Naive thymus-derived CD4-positive, alpha-beta T cell (primary cell): ENCODE measurements at regions of chr7 and their contacts with region 1.

Region 1: DNA sequence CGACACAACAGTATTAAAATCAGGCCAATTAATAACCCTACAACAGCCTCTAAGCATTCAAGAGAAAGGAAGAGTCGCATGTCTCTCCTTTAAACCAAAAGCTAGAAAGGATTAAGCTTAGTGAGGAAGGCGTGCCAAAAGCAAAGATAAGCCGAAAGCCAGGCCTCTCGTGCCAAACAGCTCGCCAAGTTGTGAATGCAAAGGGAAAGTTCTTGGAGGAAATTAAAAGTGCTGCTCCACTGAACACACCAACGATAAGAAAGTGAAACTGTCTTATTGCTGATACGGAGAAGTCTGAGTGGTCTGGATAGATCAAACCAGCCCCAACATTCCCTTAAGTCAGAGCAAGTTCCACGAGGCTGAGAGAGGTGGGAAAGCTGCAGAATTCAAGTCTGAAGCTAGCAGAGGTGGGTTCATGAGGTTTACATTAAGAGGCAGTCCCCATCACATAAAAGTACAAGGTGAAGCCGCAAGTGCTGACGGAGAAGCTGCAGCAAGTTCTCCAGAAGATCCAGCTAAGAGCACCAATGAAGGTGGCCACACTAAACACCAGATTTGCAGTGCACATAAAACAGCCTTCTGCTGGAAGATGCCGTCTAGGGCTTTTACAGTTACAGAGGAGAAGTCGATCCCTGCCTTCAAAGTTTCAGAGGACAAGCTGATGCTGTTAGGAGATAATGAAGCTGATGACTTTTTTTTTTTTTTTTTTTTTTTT is 194.8 kb downstream of the MAD1L1 start:
- DNase-seq: peak in 7 of 9 donors; percentile 44 to 66 (median 53)
- ATAC-seq: peak; percentile 65
- H3K4me3 ChIP-seq: peak overlapping the region; percentile 83
- H3K4me3 Mint-ChIP-seq: peak overlapping the region; percentile 83 to 95 (median 92)
- H3K27ac ChIP-seq: peak overlapping the region; percentile 70
- H3K27ac Mint-ChIP-seq: peak overlapping the region; percentile 73 to 95 (median 92)
- H3K4me1 ChIP-seq: peaks cover 18 to 23% of the 10 kb centered on the region in 2 donors
- H3K4me1 Mint-ChIP-seq: peaks cover 37 to 66% (median 59%) of the 10 kb centered on the region in 7 donors
- H3K27me3 ChIP-seq: no peaks in the 10 kb centered on the region
- H3K27me3 Mint-ChIP-seq: no peaks in the 10 kb centered on the region

Region 2: GRCh38 chr7:1979591-1980560 is 58.1 kb before region 1 on chr7:
- CTCF ChIA-PET with region 1: no interaction called
- POLR2A ChIA-PET with region 1: no interaction called
- intact Hi-C with region 1: loop called (anchors 5 to 10 kb)
- DNase-seq: no peak
- ATAC-seq: peak; percentile 10
- H3K4me3 ChIP-seq: no peak overlapping the region
- H3K4me3 Mint-ChIP-seq: peak overlapping the region in 1 of 10 donors; percentile 34
- H3K27ac ChIP-seq: no peak overlapping the region
- H3K27ac Mint-ChIP-seq: peak overlapping the region in 1 of 9 donors; percentile 32
- H3K4me1 ChIP-seq: peaks cover 0 to 20% of the 10 kb centered on the region in 2 donors
- H3K4me1 Mint-ChIP-seq: peaks cover 0 to 33% (median 25%) of the 10 kb centered on the region in 7 donors
- H3K27me3 ChIP-seq: no peaks in the 10 kb centered on the region
- H3K27me3 Mint-ChIP-seq: no peaks in the 10 kb centered on the region

Region 3: GRCh38 chr7:2019607-2020511 is 18.1 kb before region 1 on chr7:
- CTCF ChIA-PET with region 1: no interaction called
- POLR2A ChIA-PET with region 1: no interaction called
- intact Hi-C with region 1: loop called in 1 of 2 experiments (anchors 2 kb)
- DNase-seq: peak; percentile 35 to 79 (median 69)
- ATAC-seq: peak; percentile 87
- H3K4me3 ChIP-seq: peak overlapping the region; percentile 18
- H3K4me3 Mint-ChIP-seq: peak overlapping the region in 9 of 10 donors; percentile 72 to 87 (median 78)
- H3K27ac ChIP-seq: peak overlapping the region; percentile 46
- H3K27ac Mint-ChIP-seq: peak overlapping the region; percentile 63 to 99 (median 90)
- H3K4me1 ChIP-seq: peaks cover 0 to 16% of the 10 kb centered on the region in 2 donors
- H3K4me1 Mint-ChIP-seq: peaks cover 13 to 36% (median 31%) of the 10 kb centered on the region in 7 donors
- H3K27me3 ChIP-seq: no peaks in the 10 kb centered on the region
- H3K27me3 Mint-ChIP-seq: no peaks in the 10 kb centered on the region

Region 4: DNA sequence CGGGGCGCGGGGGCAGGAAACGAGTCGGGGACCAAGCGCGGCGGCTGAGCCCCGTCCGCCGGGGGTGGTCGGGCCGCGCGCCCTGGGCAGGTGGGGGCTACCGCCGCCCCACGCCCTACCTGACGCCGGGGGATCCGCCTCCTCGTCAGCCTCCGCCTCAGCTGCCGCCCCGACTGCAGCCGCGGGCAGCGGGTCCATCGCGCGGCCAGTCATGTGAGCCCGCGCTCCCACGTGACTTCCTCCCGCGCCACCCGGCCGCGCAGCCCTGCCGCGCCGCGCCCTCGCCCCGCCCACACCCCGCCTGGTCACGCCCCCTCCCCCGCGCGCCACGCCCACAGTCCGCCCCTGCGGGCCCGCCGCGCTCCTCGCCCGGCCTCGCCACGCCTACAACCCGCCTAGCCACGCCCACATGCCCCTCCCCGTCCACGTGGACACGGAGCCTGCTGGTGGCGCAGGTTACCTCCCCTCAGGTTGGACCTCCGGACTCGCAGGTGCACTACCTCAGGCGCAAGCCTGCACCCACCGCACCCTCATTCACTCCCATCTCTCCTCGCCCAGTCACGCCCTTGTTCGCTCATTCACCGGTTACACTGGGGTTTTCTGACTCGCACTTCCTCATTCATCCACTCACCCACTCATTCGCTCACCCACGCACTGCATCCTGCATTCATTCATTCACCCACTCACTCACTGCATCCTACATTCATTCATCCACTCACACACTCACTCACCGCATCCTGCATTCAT is 276.4 kb after region 1 on chr7 and contains the start of gene SNX8:
- CTCF ChIA-PET with region 1: no interaction called
- POLR2A ChIA-PET with region 1: no interaction called
- intact Hi-C with region 1: no loop called
- DNase-seq: peak; percentile 91 to 99 (median 94)
- ATAC-seq: peak; percentile 98
- H3K4me3 ChIP-seq: peak within 1 kb of the TSS; percentile 59
- H3K4me3 Mint-ChIP-seq: peak within 1 kb of the TSS in 7 of 10 donors; percentile 87 to 96 (median 93)
- H3K27ac ChIP-seq: peak within 1 kb of the TSS; percentile 60
- H3K27ac Mint-ChIP-seq: peak within 1 kb of the TSS; percentile 62 to 89 (median 88)
- H3K4me1 ChIP-seq: no peaks in the 10 kb centered on the region
- H3K4me1 Mint-ChIP-seq: peaks cover 0 to 19% (median 15%) of the 10 kb centered on the region in 7 donors
- H3K27me3 ChIP-seq: no peaks in the 10 kb centered on the region
- H3K27me3 Mint-ChIP-seq: no peaks in the 10 kb centered on the region
- total RNA-seq, gene SNX8: 4.7 to 31.5 (median 9.4) TPM